HCT116 (cell line): ENCODE measurements at regions of chr15 and their contacts with region 1.

Region 1: DNA sequence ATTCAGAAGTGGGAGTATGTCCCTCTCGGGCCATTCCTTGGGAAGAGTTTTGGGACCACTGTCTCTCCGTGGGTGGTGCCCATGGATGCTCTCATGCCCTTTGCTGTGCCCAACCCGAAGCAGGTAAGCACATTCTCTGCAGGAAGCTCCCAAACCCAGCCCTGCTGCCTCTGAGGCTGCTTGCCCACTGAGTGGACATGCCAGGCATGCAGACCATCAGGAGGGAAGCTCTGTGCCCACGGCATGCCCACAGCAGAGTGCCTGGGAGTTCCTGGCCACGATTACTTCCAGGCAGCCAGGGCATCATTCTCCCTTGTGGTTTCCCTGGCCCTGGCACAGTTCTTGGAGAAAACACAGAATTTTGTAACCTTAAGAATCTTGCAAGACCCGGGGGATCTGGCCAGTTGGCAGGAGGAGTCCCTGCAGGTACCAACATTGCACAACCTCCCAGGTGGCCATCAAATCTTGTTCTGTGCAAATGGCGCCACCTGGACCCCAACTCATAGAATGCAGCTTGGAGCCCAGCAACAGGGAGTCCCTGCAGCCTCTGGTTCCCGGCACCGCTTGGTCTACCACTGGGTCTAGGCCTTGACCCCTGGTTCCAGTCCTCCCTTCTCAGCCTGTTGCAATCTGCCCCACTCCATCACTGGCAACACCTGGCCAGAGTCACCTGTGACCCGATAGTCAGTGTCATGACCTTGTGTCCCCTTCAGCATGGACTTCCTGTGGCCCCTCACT is 20.4 kb downstream of the FAH start:
- DNase-seq: peak; percentile 42
- ATAC-seq: peak; percentile 94
- H3K4me3 ChIP-seq: no peak overlapping the region
- H3K27ac ChIP-seq: no peak overlapping the region
- H3K4me1 ChIP-seq: no peaks in the 10 kb centered on the region
- H3K27me3 ChIP-seq: no peaks in the 10 kb centered on the region
- CTCF ChIP-seq: peak; percentile 69 to 79 (median 72)
- POLR2A ChIP-seq: no peak
- RAD21 ChIP-seq: peak; percentile 87

Region 2: DNA sequence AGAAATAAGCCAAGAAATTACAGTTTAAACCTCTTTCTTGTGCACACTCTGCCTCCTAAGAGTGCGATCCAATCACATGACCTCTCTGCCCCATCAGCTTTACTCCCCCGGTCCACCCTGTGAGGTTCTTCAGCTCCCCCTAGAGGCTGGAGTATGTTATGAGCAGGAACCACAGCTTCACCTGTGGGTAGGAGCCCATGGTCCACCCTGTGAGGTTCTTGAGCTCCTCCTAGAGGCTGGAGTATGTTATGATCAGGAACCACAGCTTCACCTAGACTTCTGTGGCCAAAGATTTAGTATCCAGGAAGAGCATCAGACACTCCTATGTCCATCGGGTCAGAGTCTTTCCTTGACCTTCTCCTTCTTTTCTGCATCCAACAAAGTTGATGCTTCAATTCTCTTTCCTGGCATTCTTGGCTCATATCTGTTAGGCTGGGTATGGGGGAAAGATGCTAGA is 577.1 kb before region 1 on chr15:
- CTCF ChIA-PET with region 1: interaction called, 5 read pairs
- POLR2A ChIA-PET with region 1: no interaction called
- RAD21 ChIA-PET with region 1: no interaction called
- intact Hi-C with region 1: loop called (anchors 10 kb)
- DNase-seq: peak; percentile 95
- ATAC-seq: peak; percentile 99
- H3K4me3 ChIP-seq: no peak overlapping the region
- H3K27ac ChIP-seq: no peak overlapping the region
- H3K4me1 ChIP-seq: no peaks in the 10 kb centered on the region
- H3K27me3 ChIP-seq: peaks cover 14% of the 10 kb centered on the region
- CTCF ChIP-seq: peak; percentile 99 to 100 (median 99)
- POLR2A ChIP-seq: no peak
- RAD21 ChIP-seq: peak; percentile 89

Region 3: GRCh38 chr15:79769069-79769481 is 404.1 kb before region 1 on chr15:
- CTCF ChIA-PET with region 1: interaction called, 4 read pairs
- POLR2A ChIA-PET with region 1: no interaction called
- RAD21 ChIA-PET with region 1: no interaction called
- intact Hi-C with region 1: loop called (anchors 1 kb)
- DNase-seq: peak; percentile 10
- ATAC-seq: peak; percentile 84
- H3K4me3 ChIP-seq: no peak overlapping the region
- H3K27ac ChIP-seq: no peak overlapping the region
- H3K4me1 ChIP-seq: no peaks in the 10 kb centered on the region
- H3K27me3 ChIP-seq: peaks cover 34% of the 10 kb centered on the region
- CTCF ChIP-seq: peak; percentile 60 to 72 (median 61); a peak in 5 of 6 replicates
- POLR2A ChIP-seq: no peak
- RAD21 ChIP-seq: peak; percentile 67

Region 4: DNA sequence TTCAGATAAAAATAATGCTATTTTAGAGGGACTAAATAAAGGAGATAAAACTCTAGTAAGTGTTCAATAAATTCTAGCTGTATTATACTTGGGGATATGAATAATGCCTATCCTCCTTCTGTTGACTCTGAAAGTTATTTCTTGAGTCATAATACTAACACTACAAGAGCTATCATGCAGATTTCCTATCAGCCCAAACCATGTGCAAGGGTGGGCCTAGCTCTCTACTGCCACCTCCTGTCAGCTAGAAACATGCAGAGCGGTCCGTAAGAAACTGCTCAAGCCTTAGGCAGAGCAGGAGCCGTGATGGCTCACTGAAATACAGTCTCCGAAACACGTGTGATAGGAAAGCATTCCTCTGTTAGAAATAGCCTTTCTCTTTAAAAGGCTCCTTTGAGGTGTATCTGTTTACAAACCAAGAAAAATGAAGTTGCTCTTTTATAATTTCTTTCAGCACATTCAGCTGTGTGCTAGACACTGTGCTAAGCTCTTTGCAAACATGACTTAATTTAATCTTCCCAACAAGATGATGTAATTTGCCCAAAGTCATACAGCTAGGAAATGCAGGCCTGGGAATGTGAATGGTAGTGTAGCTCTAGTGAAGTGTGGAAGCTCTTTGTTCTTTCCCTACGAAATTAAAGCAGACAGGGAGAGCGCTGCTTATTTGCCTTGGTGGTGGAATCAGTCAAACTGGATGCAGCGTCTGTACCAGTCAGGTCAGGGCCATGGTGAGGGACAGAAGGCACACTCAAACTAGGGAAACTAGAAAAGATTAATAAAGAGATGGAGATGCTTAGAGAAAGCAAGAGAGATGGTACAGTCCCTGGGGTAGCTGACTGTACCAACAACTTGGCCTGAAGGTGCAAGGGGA is 319.5 kb before region 1 on chr15:
- CTCF ChIA-PET with region 1: interaction called, 6 read pairs
- POLR2A ChIA-PET with region 1: no interaction called
- RAD21 ChIA-PET with region 1: no interaction called
- intact Hi-C with region 1: loop called (anchors 10 kb)
- DNase-seq: peak; percentile 47
- ATAC-seq: peak; percentile 98
- H3K4me3 ChIP-seq: no peak overlapping the region
- H3K27ac ChIP-seq: no peak overlapping the region
- H3K4me1 ChIP-seq: no peaks in the 10 kb centered on the region
- H3K27me3 ChIP-seq: no peaks in the 10 kb centered on the region
- CTCF ChIP-seq: peak; percentile 63 to 98 (median 94); a peak in 5 of 6 replicates
- POLR2A ChIP-seq: no peak
- RAD21 ChIP-seq: peak; percentile 63

Region 5: GRCh38 chr15:79896637-79897379 is 276.4 kb before region 1 on chr15 and contains the start of gene MTHFS:
- CTCF ChIA-PET with region 1: no interaction called
- POLR2A ChIA-PET with region 1: no interaction called
- RAD21 ChIA-PET with region 1: no interaction called
- intact Hi-C with region 1: loop called (anchors 10 kb)
- DNase-seq: peak; percentile 63
- ATAC-seq: peak; percentile 95
- H3K4me3 ChIP-seq: peak within 1 kb of the TSS; percentile 81 to 90
- H3K27ac ChIP-seq: peak within 1 kb of the TSS; percentile 93
- H3K4me1 ChIP-seq: peaks cover 0 to 17% of the 10 kb centered on the region in 2 experiments; a peak in 2 of 4 replicates
- H3K27me3 ChIP-seq: no peaks in the 10 kb centered on the region
- CTCF ChIP-seq: peak; percentile 18 to 49 (median 36); a peak in 3 of 6 replicates
- POLR2A ChIP-seq: peak; percentile 91
- RAD21 ChIP-seq: peak; percentile 37; the same call in 1 of the 2 replicates
- total RNA-seq, gene MTHFS: 30.5 TPM

Region 6: DNA sequence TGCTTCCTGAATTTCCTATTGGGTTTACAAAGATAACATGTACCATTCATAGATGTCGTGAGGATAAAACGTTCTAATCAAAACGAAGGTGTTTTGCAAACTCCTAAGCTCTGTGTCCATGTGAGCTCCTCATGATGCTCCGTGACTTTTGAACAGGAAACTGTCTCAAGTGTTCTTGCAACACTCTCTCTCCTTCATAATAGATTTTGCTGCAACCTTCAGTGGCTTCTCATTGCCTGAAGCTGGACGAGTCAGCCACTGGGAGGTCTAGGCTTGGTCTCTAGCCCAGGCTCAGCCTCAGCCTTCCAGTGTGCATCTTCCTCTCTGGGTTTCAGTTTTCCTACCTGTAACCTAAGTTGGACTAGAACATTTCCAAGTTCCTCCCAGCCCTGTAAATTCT is 183.5 kb before region 1 on chr15:
- CTCF ChIA-PET with region 1: no interaction called
- POLR2A ChIA-PET with region 1: no interaction called
- RAD21 ChIA-PET with region 1: no interaction called
- intact Hi-C with region 1: loop called (anchors 1 kb)
- DNase-seq: no peak
- ATAC-seq: no peak
- H3K4me3 ChIP-seq: no peak overlapping the region
- H3K27ac ChIP-seq: no peak overlapping the region
- H3K4me1 ChIP-seq: peaks cover 3 to 10% of the 10 kb centered on the region in 2 experiments; a peak in 3 of 4 replicates
- H3K27me3 ChIP-seq: peaks cover 4% of the 10 kb centered on the region; the same call in 1 of the 2 replicates
- CTCF ChIP-seq: no peak
- POLR2A ChIP-seq: no peak
- RAD21 ChIP-seq: no peak